Activated T-helper 1 cell treated with anti-CD3 and anti-CD28 coated beads, Interleukin-12 subunit alpha, Interleukin-12 subunit beta, Interleukin-2, Interleukin-4 antibody, amounts not matched to agents 30 ng/mL and 10 ng/mL and 1 ng/mL, durations not matched to agents 14 hours and 24 hours and 36 hours (primary cell): ENCODE measurements at regions of chr11 and their contacts with region 1.

Region 1: GRCh38 chr11:108713076-108713790 is 48.4 kb downstream of the DDX10 start:
- DNase-seq: no peak
- H3K4me3 Mint-ChIP-seq: peak overlapping the region; percentile 19
- H3K27ac Mint-ChIP-seq: peak overlapping the region; percentile 92
- H3K4me1 Mint-ChIP-seq: peaks cover 44% of the 10 kb centered on the region
- H3K27me3 Mint-ChIP-seq: no peaks in the 10 kb centered on the region

Region 2: GRCh38 chr11:108727665-108728064 is 14.4 kb after region 1 on chr11:
- intact Hi-C with region 1: loop called (anchors 1 kb)
- DNase-seq: no peak
- H3K4me3 Mint-ChIP-seq: peak overlapping the region; percentile 5
- H3K27ac Mint-ChIP-seq: peak overlapping the region; percentile 19
- H3K4me1 Mint-ChIP-seq: peaks cover 47% of the 10 kb centered on the region
- H3K27me3 Mint-ChIP-seq: no peaks in the 10 kb centered on the region